ENCODE measurements at regions of chr17 and their contacts with region 1.

Region 1: GRCh38 chr17:9811086-9811485 is 10.8 kb downstream of the GSG1L2 start:
- DNase-seq: no peak
- ATAC-seq: no peak
- H3K4me3 ChIP-seq: no peak overlapping the region
- H3K27ac ChIP-seq: no peak overlapping the region
- H3K4me1 ChIP-seq: no peaks in the 10 kb centered on the region
- H3K27me3 ChIP-seq: no peaks in the 10 kb centered on the region
- CTCF ChIP-seq: no peak

Region 2: DNA sequence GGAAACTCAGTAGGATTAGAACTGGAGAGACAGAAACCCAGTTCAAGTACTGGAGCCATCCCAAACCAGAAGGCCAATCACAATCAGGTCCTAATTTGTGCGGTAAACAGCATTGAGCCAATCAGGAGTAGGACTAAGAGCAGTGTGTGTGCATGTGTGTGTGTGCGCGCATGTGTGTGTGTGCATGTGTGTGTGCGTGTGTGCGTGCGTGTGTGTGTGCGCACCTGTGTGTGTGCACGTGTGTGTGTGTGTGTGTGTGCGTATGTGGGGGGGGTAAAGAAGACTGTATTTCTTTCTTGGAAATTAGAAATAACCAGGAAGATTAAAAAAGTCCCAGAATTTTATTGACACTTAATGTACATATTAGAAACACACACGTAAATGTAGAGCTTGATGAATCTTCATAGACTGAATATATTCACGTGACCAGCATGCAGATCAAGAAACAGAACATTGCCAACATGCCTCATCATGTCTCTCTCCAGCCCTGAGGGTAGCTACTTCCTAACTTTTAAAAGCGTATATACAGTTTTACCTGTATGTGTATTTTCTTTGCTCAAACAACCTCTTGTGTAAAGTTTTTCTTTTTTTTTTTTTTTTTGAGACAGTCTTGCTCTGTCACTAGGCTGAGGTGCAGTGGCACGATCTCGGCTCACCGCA is 18.8 kb before region 1 on chr17:
- intact Hi-C with region 1: loop called in 1 of 3 experiments (anchors 2 kb)
- DNase-seq: no peak
- ATAC-seq: no peak
- H3K4me3 ChIP-seq: no peak overlapping the region
- H3K27ac ChIP-seq: no peak overlapping the region
- H3K4me1 ChIP-seq: no peaks in the 10 kb centered on the region
- H3K27me3 ChIP-seq: no peaks in the 10 kb centered on the region
- CTCF ChIP-seq: no peak

Measured in pancreas (tissue), 10 donors.